Endothelial cell of umbilical vein (primary cell): ENCODE measurements at regions of chr1 and their contacts with region 1.

Region 1: GRCh38 chr1:177824508-177824982 is 145.3 kb downstream of the SEC16B start:
- DNase-seq: no peak
- H3K4me3 ChIP-seq: no peak overlapping the region
- H3K27ac ChIP-seq: no peak overlapping the region
- H3K4me1 ChIP-seq: no peaks in the 10 kb centered on the region
- H3K27me3 ChIP-seq: no peaks in the 10 kb centered on the region
- CTCF ChIP-seq: no peak
- POLR2A ChIP-seq: no peak

Region 2: GRCh38 chr1:177645491-177646190 is 178.9 kb before region 1 on chr1:
- CTCF ChIA-PET with region 1: no interaction called
- POLR2A ChIA-PET with region 1: no interaction called
- dilution Hi-C with region 1: no loop called
- intact Hi-C with region 1: no loop called
- DNase-seq: no peak
- H3K4me3 ChIP-seq: no peak overlapping the region
- H3K27ac ChIP-seq: no peak overlapping the region
- H3K4me1 ChIP-seq: no peaks in the 10 kb centered on the region
- H3K27me3 ChIP-seq: no peaks in the 10 kb centered on the region
- CTCF ChIP-seq: no peak
- POLR2A ChIP-seq: no peak

Region 3: DNA sequence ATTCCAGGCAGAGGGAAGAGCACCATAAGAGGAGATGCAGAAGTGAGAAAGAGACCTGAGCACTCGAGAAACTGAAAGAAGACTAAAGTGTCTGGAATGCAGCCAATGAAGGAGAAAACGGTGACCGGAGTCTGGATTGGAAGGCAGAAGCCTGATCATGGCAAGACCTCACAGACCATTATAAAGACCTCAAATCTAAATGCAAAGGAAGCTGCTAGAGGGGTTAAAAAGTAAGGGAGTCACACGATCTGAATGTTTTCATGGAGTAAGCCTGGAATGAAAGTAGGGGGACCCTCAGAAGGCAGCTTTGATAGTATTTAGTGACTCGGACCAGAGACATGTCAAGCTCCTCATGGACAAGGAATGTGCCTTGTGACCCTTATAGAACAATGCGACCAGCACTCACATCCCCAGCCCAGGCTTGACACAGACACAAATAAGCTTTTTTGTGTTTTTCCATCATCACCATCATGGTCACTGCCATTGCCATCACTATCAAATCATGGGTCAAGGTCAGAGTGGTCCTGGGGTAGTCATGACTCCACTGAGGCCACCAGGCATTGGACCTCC is 38.3 kb before region 1 on chr1:
- CTCF ChIA-PET with region 1: no interaction called
- POLR2A ChIA-PET with region 1: no interaction called
- dilution Hi-C with region 1: loop called (anchors 5 kb)
- intact Hi-C with region 1: no loop called
- DNase-seq: no peak
- H3K4me3 ChIP-seq: no peak overlapping the region
- H3K27ac ChIP-seq: no peak overlapping the region
- H3K4me1 ChIP-seq: peaks cover 4% of the 10 kb centered on the region
- H3K27me3 ChIP-seq: no peaks in the 10 kb centered on the region
- CTCF ChIP-seq: no peak
- POLR2A ChIP-seq: no peak